ENCODE measurements at regions of chr11 and their contacts with region 1.

Region 1: GRCh38 chr11:111586388-111586831 is 15.8 kb upstream of the SIK2 start:
- DNase-seq: peak; percentile 40
- H3K4me3 Mint-ChIP-seq: no peak overlapping the region
- H3K27ac Mint-ChIP-seq: no peak overlapping the region
- H3K4me1 Mint-ChIP-seq: no peaks in the 10 kb centered on the region
- H3K27me3 Mint-ChIP-seq: peaks cover 4% of the 10 kb centered on the region

Region 2: GRCh38 chr11:111841370-111842053 is 255.1 kb after region 1 on chr11:
- CTCF ChIA-PET with region 1: interaction called, 28 read pairs
- POLR2A ChIA-PET with region 1: no interaction called
- DNase-seq: peak; percentile 88
- H3K4me3 Mint-ChIP-seq: no peak overlapping the region
- H3K27ac Mint-ChIP-seq: no peak overlapping the region
- H3K4me1 Mint-ChIP-seq: peaks cover 10% of the 10 kb centered on the region
- H3K27me3 Mint-ChIP-seq: no peaks in the 10 kb centered on the region

Measured in activated CD4-positive, alpha-beta memory T cell treated with anti-CD3 and anti-CD28 coated beads, Interleukin-2, amount 10 ng/mL, durations not matched to agents 7 days and 5 days (primary cell).